AG04450 (cell line): ENCODE measurements at regions of chr2 and their contacts with region 1.

Region 1: DNA sequence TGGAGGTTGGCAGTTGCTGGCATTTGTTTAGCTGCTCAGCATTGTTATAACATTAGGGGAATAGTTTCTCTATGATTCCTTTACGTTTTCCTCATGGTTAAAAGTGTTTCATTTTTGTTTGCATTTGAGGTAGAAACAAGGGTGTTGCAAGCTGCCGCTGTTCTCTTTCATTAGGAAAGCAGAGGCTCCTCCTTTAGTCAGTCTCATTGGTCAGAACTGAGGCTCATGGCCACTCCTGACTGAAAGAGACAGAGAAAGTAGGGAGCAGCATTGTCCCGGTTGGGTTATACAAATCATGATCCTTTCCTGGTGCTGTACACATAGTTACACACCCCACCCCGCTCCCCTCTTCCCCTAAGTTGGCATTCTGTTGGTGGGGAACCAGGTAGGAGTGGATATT is 59.8 kb upstream of the PTH2R start:
- DNase-seq: no peak
- H3K4me3 ChIP-seq: no peak overlapping the region
- H3K27ac ChIP-seq: no peak overlapping the region
- H3K27me3 ChIP-seq: no peaks in the 10 kb centered on the region
- CTCF ChIP-seq: no peak

Region 2: GRCh38 chr2:207385903-207386302 is 960.9 kb before region 1 on chr2:
- CTCF ChIA-PET with region 1: no interaction called
- POLR2A ChIA-PET with region 1: no interaction called
- DNase-seq: peak; percentile 48
- H3K4me3 ChIP-seq: no peak overlapping the region
- H3K27ac ChIP-seq: no peak overlapping the region
- H3K27me3 ChIP-seq: no peaks in the 10 kb centered on the region
- CTCF ChIP-seq: no peak

Region 3: GRCh38 chr2:208265801-208266552 is 80.8 kb before region 1 on chr2 and contains the start of gene PIKFYVE:
- CTCF ChIA-PET with region 1: interaction called, 11 read pairs
- POLR2A ChIA-PET with region 1: no interaction called
- DNase-seq: peak; percentile 91
- H3K4me3 ChIP-seq: peak within 1 kb of the TSS; percentile 91
- H3K27ac ChIP-seq: peak within 1 kb of the TSS; percentile 92
- H3K27me3 ChIP-seq: no peaks in the 10 kb centered on the region
- CTCF ChIP-seq: no peak
- polyA plus RNA-seq, gene PIKFYVE: 19.6 and 23.8 TPM in 2 replicates